ENCODE measurements at regions of chr12 and their contacts with region 1.

Region 1: GRCh38 chr12:12486661-12487240 is 75.9 kb downstream of the DUSP16 start:
- DNase-seq: no peak
- H3K4me3 ChIP-seq: no peak overlapping the region
- H3K4me3 Mint-ChIP-seq: peak overlapping the region in 6 of 8 donors; percentile 14 to 65 (median 28)
- H3K27ac ChIP-seq: peak overlapping the region; percentile 40
- H3K27ac Mint-ChIP-seq: peak overlapping the region; percentile 84 to 99 (median 92)
- H3K4me1 ChIP-seq: peaks cover 78% of the 10 kb centered on the region
- H3K4me1 Mint-ChIP-seq: peaks cover 36 to 70% (median 56%) of the 10 kb centered on the region in 4 donors
- H3K27me3 ChIP-seq: no peaks in the 10 kb centered on the region
- H3K27me3 Mint-ChIP-seq: no peaks in the 10 kb centered on the region

Region 2: GRCh38 chr12:12442548-12443071 is 44.1 kb before region 1 on chr12:
- CTCF ChIA-PET with region 1: interaction called, 5 read pairs
- POLR2A ChIA-PET with region 1: interaction called, 82 read pairs
- intact Hi-C with region 1: loop called (anchors 1 kb)
- DNase-seq: no peak
- H3K4me3 ChIP-seq: no peak overlapping the region
- H3K4me3 Mint-ChIP-seq: peak overlapping the region in 6 of 8 donors; percentile 8 to 85 (median 70)
- H3K27ac ChIP-seq: peak overlapping the region; percentile 65
- H3K27ac Mint-ChIP-seq: peak overlapping the region; percentile 90 to 99 (median 98)
- H3K4me1 ChIP-seq: peaks cover 95% of the 10 kb centered on the region
- H3K4me1 Mint-ChIP-seq: peaks cover 68 to 93% (median 80%) of the 10 kb centered on the region in 4 donors
- H3K27me3 ChIP-seq: no peaks in the 10 kb centered on the region
- H3K27me3 Mint-ChIP-seq: no peaks in the 10 kb centered on the region

Region 3: GRCh38 chr12:12467688-12468261 is 19.0 kb before region 1 on chr12:
- CTCF ChIA-PET with region 1: interaction called, 16 read pairs
- POLR2A ChIA-PET with region 1: interaction called, 970 read pairs
- intact Hi-C with region 1: loop called (anchors 1 kb)
- DNase-seq: peak; percentile 76 to 88 (median 85)
- H3K4me3 ChIP-seq: peak overlapping the region in 1 of 2 donors; percentile 12
- H3K4me3 Mint-ChIP-seq: peak overlapping the region; percentile 52 to 83 (median 62)
- H3K27ac ChIP-seq: peak overlapping the region; percentile 82
- H3K27ac Mint-ChIP-seq: peak overlapping the region; percentile 98 to 100 (median 99)
- H3K4me1 ChIP-seq: peaks cover 78% of the 10 kb centered on the region
- H3K4me1 Mint-ChIP-seq: peaks cover 55 to 90% (median 76%) of the 10 kb centered on the region in 4 donors
- H3K27me3 ChIP-seq: no peaks in the 10 kb centered on the region
- H3K27me3 Mint-ChIP-seq: no peaks in the 10 kb centered on the region

Region 4: DNA sequence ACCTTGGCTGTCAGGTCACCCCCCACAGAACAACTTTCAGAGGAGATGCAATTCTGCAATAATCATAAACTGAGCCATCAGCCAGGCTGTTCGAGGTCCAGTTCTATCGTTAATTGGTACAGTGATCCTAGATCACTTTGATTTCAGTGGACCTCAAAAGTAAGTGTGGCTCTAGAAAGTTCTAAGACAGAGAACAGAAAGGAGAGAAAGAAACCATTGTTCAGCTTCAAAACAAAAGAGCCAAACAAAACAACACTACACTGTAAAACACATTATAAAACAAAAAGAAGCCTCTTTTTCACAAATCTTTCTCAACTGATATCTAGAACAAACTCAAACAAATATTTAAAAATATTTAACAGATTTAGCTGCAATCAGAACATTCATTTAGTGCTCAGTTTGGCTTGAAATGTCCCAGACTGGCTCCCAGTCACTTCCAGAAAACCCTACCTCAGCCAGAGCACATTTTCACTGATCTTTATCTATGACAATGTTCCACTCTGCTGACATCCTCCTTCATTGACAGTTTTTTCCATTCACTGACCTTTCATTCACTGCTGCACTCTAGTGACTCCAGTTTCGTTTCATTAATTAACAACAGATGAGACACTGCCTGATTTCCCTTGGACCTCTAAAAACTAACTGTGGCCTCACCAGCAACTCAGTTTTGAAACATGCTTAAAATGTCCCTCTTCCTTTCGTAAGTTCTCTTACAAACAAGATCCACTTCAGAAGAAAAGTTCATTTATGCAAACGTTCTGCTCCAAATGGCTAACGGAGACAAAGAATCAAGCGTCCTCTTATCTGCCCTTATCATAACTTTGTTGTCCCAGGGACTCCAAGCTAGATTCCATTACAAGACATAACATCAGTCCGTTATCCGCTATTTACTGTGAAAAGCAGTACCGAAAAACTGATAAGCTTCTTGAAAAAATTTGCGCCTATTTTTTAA is 19.1 kb after region 1 on chr12:
- CTCF ChIA-PET with region 1: interaction called, 8 read pairs
- POLR2A ChIA-PET with region 1: interaction called, 48 read pairs
- intact Hi-C with region 1: loop called (anchors 1 kb)
- DNase-seq: peak in 4 of 5 donors; percentile 28 to 42 (median 32)
- H3K4me3 ChIP-seq: no peak overlapping the region
- H3K4me3 Mint-ChIP-seq: peak overlapping the region in 7 of 8 donors; percentile 37 to 84 (median 73)
- H3K27ac ChIP-seq: peak overlapping the region; percentile 48
- H3K27ac Mint-ChIP-seq: peak overlapping the region; percentile 66 to 95 (median 90)
- H3K4me1 ChIP-seq: peaks cover 65% of the 10 kb centered on the region
- H3K4me1 Mint-ChIP-seq: peaks cover 53 to 77% (median 61%) of the 10 kb centered on the region in 4 donors
- H3K27me3 ChIP-seq: no peaks in the 10 kb centered on the region
- H3K27me3 Mint-ChIP-seq: no peaks in the 10 kb centered on the region

Region 5: DNA sequence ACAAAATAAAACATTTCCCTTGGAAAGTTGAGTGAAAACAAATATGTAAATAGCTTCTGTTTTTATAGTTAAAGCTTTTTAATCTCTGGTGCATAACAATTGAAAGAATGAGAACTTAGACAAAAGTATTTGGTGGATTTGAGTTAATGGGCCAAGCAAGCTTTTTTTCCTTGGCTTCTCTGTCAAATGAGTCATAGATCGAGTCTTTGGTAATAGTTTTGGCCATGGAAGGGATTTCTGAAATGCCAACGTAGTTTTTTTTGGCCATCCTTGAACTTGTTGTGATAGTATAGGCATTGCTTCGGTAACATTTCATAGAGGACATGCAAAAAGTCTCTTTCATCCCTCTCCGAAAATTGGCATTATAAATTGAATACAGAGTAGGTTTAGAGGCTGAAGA is 174.3 kb after region 1 on chr12:
- CTCF ChIA-PET with region 1: no interaction called
- POLR2A ChIA-PET with region 1: no interaction called
- intact Hi-C with region 1: loop called (anchors 1 kb)
- DNase-seq: no peak
- H3K4me3 ChIP-seq: no peak overlapping the region
- H3K4me3 Mint-ChIP-seq: no peak overlapping the region
- H3K27ac ChIP-seq: no peak overlapping the region
- H3K27ac Mint-ChIP-seq: no peak overlapping the region
- H3K4me1 ChIP-seq: peaks cover 2% of the 10 kb centered on the region
- H3K4me1 Mint-ChIP-seq: peaks cover 0 to 1% (median under 1%) of the 10 kb centered on the region in 4 donors
- H3K27me3 ChIP-seq: no peaks in the 10 kb centered on the region
- H3K27me3 Mint-ChIP-seq: no peaks in the 10 kb centered on the region

Region 6: GRCh38 chr12:12724661-12725545 is 238.2 kb after region 1 on chr12:
- CTCF ChIA-PET with region 1: no interaction called
- POLR2A ChIA-PET with region 1: interaction called, 238 read pairs
- intact Hi-C with region 1: loop called (anchors 5 kb)
- DNase-seq: peak; percentile 93 to 97 (median 96)
- H3K4me3 ChIP-seq: peak overlapping the region in 1 of 2 donors; percentile 80
- H3K4me3 Mint-ChIP-seq: peak overlapping the region; percentile 89 to 96 (median 92)
- H3K27ac ChIP-seq: peak overlapping the region; percentile 95
- H3K27ac Mint-ChIP-seq: peak overlapping the region; percentile 95 to 99 (median 97)
- H3K4me1 ChIP-seq: peaks cover 56% of the 10 kb centered on the region
- H3K4me1 Mint-ChIP-seq: peaks cover 37 to 72% (median 43%) of the 10 kb centered on the region in 4 donors
- H3K27me3 ChIP-seq: no peaks in the 10 kb centered on the region
- H3K27me3 Mint-ChIP-seq: peaks cover 0 to 1% of the 10 kb centered on the region in 2 donors